OCI-LY7 (cell line): ENCODE measurements at regions of chr5 and their contacts with region 1.

Region 1: DNA sequence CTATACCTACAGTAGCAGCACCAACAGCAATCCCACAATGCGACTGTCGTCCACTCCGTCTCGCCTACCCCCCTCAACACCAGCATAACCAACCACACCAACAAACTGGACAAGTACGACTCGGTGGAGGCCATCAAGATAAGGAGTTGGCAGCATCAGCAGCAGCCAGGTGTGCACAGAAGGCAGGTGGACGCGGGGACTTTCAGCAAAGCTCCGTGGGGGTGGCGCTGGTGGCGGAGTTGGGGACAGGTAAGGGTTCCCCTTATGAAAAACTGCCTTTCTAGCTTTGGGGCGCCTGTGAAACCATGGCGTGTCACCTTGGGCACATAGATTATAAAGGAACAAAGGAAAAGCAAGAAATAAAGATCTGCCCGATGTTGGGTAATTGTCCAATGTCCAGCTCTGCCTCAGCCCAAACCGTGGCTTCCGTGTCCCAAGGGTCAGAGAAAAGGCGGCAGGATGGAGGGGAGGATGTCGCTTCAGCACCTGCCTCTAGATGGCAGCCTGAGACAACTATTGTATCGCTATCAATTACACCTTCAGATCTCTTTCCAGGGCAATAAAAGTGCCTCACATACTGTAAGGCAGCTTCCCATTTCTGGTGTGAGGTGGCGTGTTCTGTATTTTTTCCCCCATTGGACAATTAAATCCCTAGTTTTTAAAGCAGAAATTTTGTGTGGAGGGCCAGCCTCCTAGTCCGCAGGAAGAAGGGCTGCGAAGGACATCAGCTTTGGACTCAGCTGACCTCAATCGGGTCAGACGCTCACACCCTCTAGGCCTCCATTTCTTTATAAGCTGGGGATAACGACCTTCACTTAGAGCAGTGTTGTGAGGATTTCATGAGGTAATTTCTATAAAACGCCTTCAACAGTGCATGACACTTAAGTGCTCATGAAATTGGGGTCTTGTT is 58.8 kb downstream of the MTRR start:
- DNase-seq: peak; percentile 55
- H3K4me3 ChIP-seq: no peak overlapping the region
- H3K27ac ChIP-seq: no peak overlapping the region
- H3K4me1 ChIP-seq: no peaks in the 10 kb centered on the region
- CTCF ChIP-seq: peak; percentile 83

Region 2: GRCh38 chr5:8184455-8185063 is 256.8 kb after region 1 on chr5:
- CTCF ChIA-PET with region 1: no interaction called
- POLR2A ChIA-PET with region 1: no interaction called
- intact Hi-C with region 1: loop called (anchors 10 kb)
- DNase-seq: peak; percentile 50
- H3K4me3 ChIP-seq: no peak overlapping the region
- H3K27ac ChIP-seq: no peak overlapping the region
- H3K4me1 ChIP-seq: no peaks in the 10 kb centered on the region
- CTCF ChIP-seq: peak; percentile 95

Region 3: DNA sequence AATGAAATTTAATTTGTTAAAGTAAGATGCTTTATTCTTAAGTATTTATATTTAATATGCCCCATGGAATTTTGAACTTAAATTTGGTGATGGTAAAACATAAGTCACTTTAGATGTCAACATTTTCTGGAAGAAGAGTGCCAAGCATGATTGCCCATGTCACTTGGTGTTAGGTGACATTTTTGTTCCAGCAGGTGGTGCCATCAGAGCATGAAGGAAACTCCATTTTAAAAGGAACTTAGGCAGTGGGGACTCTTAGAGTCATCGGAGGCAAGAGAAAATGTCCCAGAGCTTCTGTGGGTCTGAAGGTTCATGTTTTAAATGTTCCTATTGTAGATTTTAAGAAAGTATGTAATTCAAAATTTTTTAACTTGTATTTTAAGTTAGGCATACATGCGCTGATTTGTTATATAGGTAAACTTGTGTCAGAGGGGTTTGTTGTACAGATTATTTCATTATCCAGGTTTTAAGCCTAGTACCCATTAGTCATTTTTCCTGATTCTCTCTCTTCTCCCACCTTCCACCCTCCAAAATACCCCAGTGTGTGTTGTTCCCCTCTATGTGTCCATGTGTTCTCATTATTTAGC is 828.9 kb after region 1 on chr5:
- CTCF ChIA-PET with region 1: no interaction called
- POLR2A ChIA-PET with region 1: no interaction called
- intact Hi-C with region 1: loop called (anchors 5 kb)
- DNase-seq: peak; percentile 45
- H3K4me3 ChIP-seq: no peak overlapping the region
- H3K27ac ChIP-seq: no peak overlapping the region
- H3K4me1 ChIP-seq: no peaks in the 10 kb centered on the region
- CTCF ChIP-seq: peak; percentile 72